PC-9 (cell line): ENCODE measurements at regions of chr5 and their contacts with region 1.

Region 1: GRCh38 chr5:61331407-61332357 is at the start of gene ZSWIM6:
- DNase-seq: peak; percentile 94 to 96
- H3K4me3 ChIP-seq: peak within 1 kb of the TSS; percentile 97
- H3K27ac ChIP-seq: peak within 1 kb of the TSS; percentile 64
- H3K4me1 ChIP-seq: peaks cover 47% of the 10 kb centered on the region
- H3K27me3 ChIP-seq: no peaks in the 10 kb centered on the region
- CTCF ChIP-seq: no peak
- total RNA-seq, gene ZSWIM6: 9.7 and 12.9 TPM in 2 replicates

Region 2: GRCh38 chr5:60960591-60960990 is 371.1 kb before region 1 on chr5:
- CTCF ChIA-PET with region 1: no interaction called
- POLR2A ChIA-PET with region 1: interaction called, 10 read pairs
- intact Hi-C with region 1: no loop called
- DNase-seq: no peak
- H3K4me3 ChIP-seq: no peak overlapping the region
- H3K27ac ChIP-seq: no peak overlapping the region
- H3K4me1 ChIP-seq: no peaks in the 10 kb centered on the region
- H3K27me3 ChIP-seq: no peaks in the 10 kb centered on the region
- CTCF ChIP-seq: peak; percentile 75

Region 3: GRCh38 chr5:61162010-61162831 is 169.5 kb before region 1 on chr5 and contains the start of gene SMIM15:
- CTCF ChIA-PET with region 1: no interaction called
- POLR2A ChIA-PET with region 1: interaction called, 4 read pairs
- intact Hi-C with region 1: loop called (anchors 1 kb)
- DNase-seq: peak; percentile 81 to 85
- H3K4me3 ChIP-seq: peak within 1 kb of the TSS; percentile 95
- H3K27ac ChIP-seq: peak within 1 kb of the TSS; percentile 76
- H3K4me1 ChIP-seq: peaks cover 30% of the 10 kb centered on the region
- H3K27me3 ChIP-seq: no peaks in the 10 kb centered on the region
- CTCF ChIP-seq: no peak
- total RNA-seq, gene SMIM15: 50.6 and 58.2 TPM in 2 replicates

Region 4: DNA sequence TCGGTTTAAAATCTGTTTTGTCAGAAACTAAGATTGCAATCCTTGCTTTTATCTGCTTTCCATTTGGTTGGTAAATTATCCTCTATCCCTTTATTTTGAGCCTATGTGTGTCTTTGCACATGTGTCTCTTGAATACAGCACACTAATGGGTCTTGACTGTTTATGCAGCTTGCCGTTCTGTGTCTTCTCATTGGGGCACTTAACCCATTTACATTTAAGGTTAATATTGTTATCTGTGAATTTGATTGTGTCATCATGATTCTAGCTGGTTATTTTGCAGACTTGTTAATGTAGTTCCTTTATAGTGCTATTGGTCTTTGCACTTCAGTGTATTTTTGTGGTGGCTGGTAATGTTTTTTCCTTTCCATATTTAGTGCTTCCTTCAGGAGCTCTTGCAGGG is 133.1 kb before region 1 on chr5:
- CTCF ChIA-PET with region 1: no interaction called
- POLR2A ChIA-PET with region 1: interaction called, 20 read pairs
- intact Hi-C with region 1: no loop called
- DNase-seq: no peak
- H3K4me3 ChIP-seq: no peak overlapping the region
- H3K27ac ChIP-seq: no peak overlapping the region
- H3K4me1 ChIP-seq: no peaks in the 10 kb centered on the region
- H3K27me3 ChIP-seq: no peaks in the 10 kb centered on the region
- CTCF ChIP-seq: no peak

Region 5: DNA sequence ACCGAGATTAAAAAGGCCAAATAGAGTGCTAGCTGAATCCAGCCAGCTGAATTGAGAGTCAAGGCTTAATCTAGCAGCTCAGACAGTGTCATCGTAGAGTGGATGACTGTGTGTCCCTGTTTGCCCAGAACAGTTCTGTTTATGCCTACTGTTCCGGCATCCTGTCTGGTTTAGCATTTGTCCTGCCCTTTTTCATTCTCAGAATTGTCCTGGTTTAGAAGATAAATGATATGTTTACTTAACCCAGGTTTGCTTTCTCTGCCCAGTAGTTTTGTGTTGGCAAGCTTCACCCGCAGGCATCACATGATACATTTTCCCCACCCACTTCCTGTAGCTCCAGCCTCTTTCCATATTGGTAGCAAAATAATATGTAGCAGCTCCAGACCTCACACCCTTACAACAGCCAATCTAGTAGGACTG is 40.9 kb before region 1 on chr5:
- CTCF ChIA-PET with region 1: no interaction called
- POLR2A ChIA-PET with region 1: interaction called, 6 read pairs
- intact Hi-C with region 1: loop called (anchors 5 kb)
- DNase-seq: peak; percentile 53 to 59
- H3K4me3 ChIP-seq: no peak overlapping the region
- H3K27ac ChIP-seq: no peak overlapping the region
- H3K4me1 ChIP-seq: peaks cover 32% of the 10 kb centered on the region
- H3K27me3 ChIP-seq: no peaks in the 10 kb centered on the region
- CTCF ChIP-seq: no peak

Region 6: DNA sequence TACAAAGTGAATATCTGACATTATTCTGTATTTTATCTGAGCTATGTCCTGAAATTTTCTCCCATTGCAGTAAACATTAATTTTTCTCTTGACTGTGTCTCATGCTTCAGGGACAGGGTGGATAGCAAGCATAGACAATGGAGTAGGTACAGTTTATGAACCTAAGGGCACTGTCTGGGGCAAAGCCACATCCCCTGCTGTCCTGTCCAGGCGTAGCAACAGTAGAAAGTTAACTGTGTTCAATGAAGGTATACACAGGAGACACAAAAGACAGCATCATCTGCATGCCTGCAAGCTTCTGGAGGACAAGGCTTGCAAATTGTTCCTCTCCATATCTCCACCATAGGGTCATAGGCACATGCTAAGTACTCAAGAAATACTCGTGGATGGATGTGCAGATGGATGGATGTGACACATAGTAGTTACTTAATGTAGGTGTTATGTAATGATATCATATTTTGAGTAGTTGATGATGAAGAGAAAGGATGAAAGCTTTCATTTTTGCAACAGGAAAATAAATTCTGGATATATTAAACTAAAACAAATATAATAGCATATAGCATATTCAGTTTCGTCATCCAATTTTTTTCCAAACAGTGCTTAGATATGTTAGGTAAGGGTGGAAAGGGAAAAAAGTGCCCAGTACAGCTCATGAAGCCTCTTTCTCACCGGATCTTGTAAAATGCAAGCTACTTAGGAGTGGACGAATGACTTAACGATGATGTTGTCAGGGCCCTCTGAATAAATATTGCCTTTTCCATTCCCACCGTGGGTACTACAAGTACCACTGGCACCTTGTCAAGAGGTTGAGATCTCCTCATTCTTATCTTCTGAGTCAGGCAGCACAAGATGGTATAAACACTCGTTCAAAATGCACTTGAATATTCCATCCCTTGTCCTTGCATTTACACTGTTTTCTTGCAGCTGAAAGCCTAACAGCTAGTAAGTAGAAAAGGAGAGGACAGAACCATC is 19.6 kb before region 1 on chr5:
- CTCF ChIA-PET with region 1: interaction called, 4 read pairs
- POLR2A ChIA-PET with region 1: interaction called, 18 read pairs
- intact Hi-C with region 1: no loop called
- DNase-seq: peak; percentile 35 to 94
- H3K4me3 ChIP-seq: no peak overlapping the region
- H3K27ac ChIP-seq: peak overlapping the region; percentile 54
- H3K4me1 ChIP-seq: peaks cover 56% of the 10 kb centered on the region
- H3K27me3 ChIP-seq: no peaks in the 10 kb centered on the region
- CTCF ChIP-seq: no peak

Region 7: DNA sequence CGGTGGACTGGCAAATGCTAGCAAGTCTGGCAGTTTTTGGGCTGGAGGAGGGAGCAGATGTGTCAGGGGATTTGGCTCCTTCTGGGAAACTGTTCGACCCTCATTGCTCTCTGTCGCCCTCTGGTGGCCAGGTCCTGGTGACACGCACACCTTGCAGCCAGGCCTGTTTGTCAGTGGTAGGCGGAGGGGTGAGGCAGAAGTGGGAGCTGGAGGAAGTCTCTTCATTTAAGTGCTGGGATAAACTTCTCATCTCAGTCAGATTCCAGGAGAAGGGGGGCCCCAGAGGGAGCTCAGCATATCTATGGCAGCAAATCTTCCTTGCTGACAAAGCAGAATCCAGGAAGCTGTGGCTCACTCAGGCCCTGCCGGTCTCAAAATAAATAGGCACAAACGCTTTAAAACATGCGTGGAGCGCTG is 326.9 kb after region 1 on chr5:
- CTCF ChIA-PET with region 1: interaction called, 6 read pairs
- POLR2A ChIA-PET with region 1: interaction called, 4 read pairs
- intact Hi-C with region 1: loop called (anchors 1 kb)
- DNase-seq: peak in 1 of 2 experiments; percentile 82
- H3K4me3 ChIP-seq: no peak overlapping the region
- H3K27ac ChIP-seq: no peak overlapping the region
- H3K4me1 ChIP-seq: no peaks in the 10 kb centered on the region
- H3K27me3 ChIP-seq: no peaks in the 10 kb centered on the region
- CTCF ChIP-seq: peak; percentile 94